ENCODE measurements at regions of chr11 and their contacts with region 1.

Region 1: GRCh38 chr11:46238967-46239800 is 38.3 kb upstream of the CREB3L1 start:
- DNase-seq: peak; percentile 61 to 92 (median 84)

Region 2: DNA sequence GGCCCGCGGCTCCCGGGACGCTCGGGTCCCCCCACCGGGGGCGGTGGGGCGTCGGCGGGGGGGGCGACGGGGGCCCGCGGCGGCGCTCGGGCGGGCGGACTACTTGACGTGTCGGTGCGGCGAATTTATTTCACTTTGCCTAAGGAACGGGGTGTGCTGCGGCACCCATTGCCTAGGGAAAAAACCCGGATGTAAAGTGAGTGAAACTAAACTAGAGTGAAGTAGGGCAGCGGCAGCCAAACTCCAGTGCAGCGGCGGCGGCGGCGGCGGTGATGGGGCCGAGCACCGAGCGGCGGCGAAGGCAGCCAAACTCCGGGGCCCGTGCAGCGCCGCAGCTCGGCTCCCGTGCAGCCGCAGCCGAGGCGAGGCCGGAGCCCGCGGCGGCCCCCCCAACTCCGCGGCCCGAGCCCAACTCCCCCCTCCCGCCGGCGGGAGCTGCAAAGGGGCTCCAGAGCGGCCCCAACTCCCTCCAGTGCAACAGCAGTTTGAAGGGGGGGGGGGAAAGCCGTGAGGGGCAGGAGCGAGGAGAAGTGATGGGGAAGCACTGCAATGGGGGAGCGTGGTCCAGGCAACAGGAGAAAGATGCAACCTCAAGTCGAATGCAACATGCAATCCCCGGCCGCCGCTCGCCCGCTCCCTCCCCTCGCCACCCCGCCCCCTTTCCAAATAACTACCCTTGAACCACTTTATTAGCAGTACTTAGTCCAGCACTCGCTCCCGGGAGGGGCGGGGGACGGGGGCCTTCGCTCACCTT is 117.3 kb before region 1 on chr11:
- intact Hi-C with region 1: loop called (anchors 2 kb)
- DNase-seq: peak; percentile 57 to 90 (median 78)

Region 3: GRCh38 chr11:46295312-46296058 is 56.3 kb after region 1 on chr11:
- intact Hi-C with region 1: no loop called
- DNase-seq: peak; percentile 38 to 93 (median 82)

Region 4: GRCh38 chr11:46308631-46309419 is 69.6 kb after region 1 on chr11:
- intact Hi-C with region 1: loop called (anchors 2 kb)
- DNase-seq: peak; percentile 65 to 91 (median 82)